GM12878 (cell line): ENCODE measurements at regions of chr5 and their contacts with region 1.

Region 1: GRCh38 chr5:143200781-143201398 is 202.6 kb downstream of the NR3C1 start:
- DNase-seq: no peak
- ATAC-seq: peak; percentile 69
- H3K4me3 ChIP-seq: no peak overlapping the region
- H3K27ac ChIP-seq: peak overlapping the region; percentile 14; the same call in 1 of the 2 replicates
- H3K4me1 ChIP-seq: peaks cover 17% of the 10 kb centered on the region
- H3K27me3 ChIP-seq: no peaks in the 10 kb centered on the region
- CTCF ChIP-seq: no peak
- EP300 ChIP-seq: no peak
- POLR2A ChIP-seq: no peak
- RAD21 ChIP-seq: no peak

Region 2: GRCh38 chr5:143016777-143017516 is 183.9 kb before region 1 on chr5:
- CTCF ChIA-PET with region 1: interaction called, 8 read pairs
- POLR2A ChIA-PET with region 1: interaction called, 11 read pairs
- RAD21 ChIA-PET with region 1: interaction called, 40 read pairs
- SMC1A ChIA-PET with region 1: interaction called, 138 read pairs
- in situ Hi-C with region 1: loop called (anchors 5 kb)
- intact Hi-C with region 1: loop called (anchors 2 kb)
- DNase-seq: no peak
- ATAC-seq: peak; percentile 28
- H3K4me3 ChIP-seq: no peak overlapping the region
- H3K27ac ChIP-seq: no peak overlapping the region
- H3K4me1 ChIP-seq: peaks cover 32% of the 10 kb centered on the region
- H3K27me3 ChIP-seq: no peaks in the 10 kb centered on the region
- CTCF ChIP-seq: peak; percentile 68 to 75 (median 72)
- EP300 ChIP-seq: peak in 1 of 2 experiments; percentile 8; a peak in 1 of 4 replicates
- POLR2A ChIP-seq: no peak
- RAD21 ChIP-seq: peak; percentile 88

Region 3: DNA sequence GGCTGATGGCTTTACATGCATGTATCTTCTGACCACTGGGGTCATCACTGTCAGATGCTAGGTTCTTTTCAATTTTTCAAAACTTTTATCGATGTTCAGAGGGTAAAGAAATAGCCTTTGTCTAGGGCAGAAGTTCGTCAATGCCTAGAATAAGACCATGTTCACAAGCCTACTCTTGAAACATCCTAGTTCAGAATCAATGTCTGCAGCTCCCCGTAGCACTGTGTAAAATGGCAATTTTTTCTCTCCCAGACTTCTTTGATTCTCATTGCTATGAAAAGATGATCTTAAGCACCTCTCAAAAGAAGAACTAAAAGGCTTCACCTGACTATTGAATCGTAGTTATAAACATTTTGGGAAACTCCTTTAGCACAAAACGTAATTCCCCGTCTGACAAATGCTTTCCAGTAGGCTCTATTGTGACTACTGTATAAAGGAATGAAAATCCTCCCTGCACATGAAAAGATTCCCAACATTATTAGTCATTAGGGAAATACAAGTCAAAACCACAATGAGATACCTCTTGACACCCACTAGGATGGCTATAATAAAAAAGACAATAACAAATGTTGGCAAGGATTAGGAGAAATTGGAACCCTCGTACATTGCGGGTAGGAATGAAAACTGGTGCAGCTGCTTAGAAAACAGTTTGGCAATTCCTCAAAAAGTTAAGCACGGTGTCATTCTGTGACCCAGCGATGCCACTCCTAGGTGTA is 167.2 kb before region 1 on chr5:
- CTCF ChIA-PET with region 1: no interaction called
- POLR2A ChIA-PET with region 1: no interaction called
- RAD21 ChIA-PET with region 1: interaction called, 4 read pairs
- SMC1A ChIA-PET with region 1: interaction called, 47 read pairs
- in situ Hi-C with region 1: no loop called
- intact Hi-C with region 1: no loop called
- DNase-seq: no peak
- ATAC-seq: no peak
- H3K4me3 ChIP-seq: no peak overlapping the region
- H3K27ac ChIP-seq: no peak overlapping the region
- H3K4me1 ChIP-seq: peaks cover 23% of the 10 kb centered on the region
- H3K27me3 ChIP-seq: no peaks in the 10 kb centered on the region
- CTCF ChIP-seq: no peak
- EP300 ChIP-seq: no peak
- POLR2A ChIP-seq: no peak
- RAD21 ChIP-seq: no peak

Region 4: GRCh38 chr5:143057580-143057999 is 143.3 kb before region 1 on chr5:
- CTCF ChIA-PET with region 1: interaction called, 5 read pairs
- POLR2A ChIA-PET with region 1: interaction called, 16 read pairs
- RAD21 ChIA-PET with region 1: interaction called, 14 read pairs
- SMC1A ChIA-PET with region 1: interaction called, 50 read pairs
- in situ Hi-C with region 1: loop called (anchors 5 kb)
- intact Hi-C with region 1: loop called (anchors 1 kb)
- DNase-seq: peak; percentile 85
- ATAC-seq: peak; percentile 59
- H3K4me3 ChIP-seq: peak overlapping the region; percentile 77
- H3K27ac ChIP-seq: peak overlapping the region; percentile 100
- H3K4me1 ChIP-seq: peaks cover 56% of the 10 kb centered on the region
- H3K27me3 ChIP-seq: no peaks in the 10 kb centered on the region
- CTCF ChIP-seq: no peak
- EP300 ChIP-seq: peak; percentile 77 to 89; a peak in 3 of 4 replicates
- POLR2A ChIP-seq: peak; percentile 54; the same call in 1 of the 2 replicates
- RAD21 ChIP-seq: peak; percentile 36; the same call in 1 of the 2 replicates

Region 5: GRCh38 chr5:143177263-143177983 is 23.5 kb before region 1 on chr5:
- CTCF ChIA-PET with region 1: interaction called, 82 read pairs
- POLR2A ChIA-PET with region 1: interaction called, 8 read pairs
- RAD21 ChIA-PET with region 1: interaction called, 227 read pairs
- SMC1A ChIA-PET with region 1: interaction called, 193 read pairs
- in situ Hi-C with region 1: no loop called
- intact Hi-C with region 1: no loop called
- DNase-seq: no peak
- ATAC-seq: no peak
- H3K4me3 ChIP-seq: no peak overlapping the region
- H3K27ac ChIP-seq: no peak overlapping the region
- H3K4me1 ChIP-seq: peaks cover 8% of the 10 kb centered on the region
- H3K27me3 ChIP-seq: no peaks in the 10 kb centered on the region
- CTCF ChIP-seq: no peak
- EP300 ChIP-seq: no peak
- POLR2A ChIP-seq: no peak
- RAD21 ChIP-seq: no peak

Region 6: GRCh38 chr5:143213851-143214363 is 13.0 kb after region 1 on chr5:
- CTCF ChIA-PET with region 1: interaction called, 69 read pairs
- POLR2A ChIA-PET with region 1: interaction called, 97 read pairs
- RAD21 ChIA-PET with region 1: interaction called, 482 read pairs
- SMC1A ChIA-PET with region 1: interaction called, 423 read pairs
- in situ Hi-C with region 1: no loop called
- intact Hi-C with region 1: loop called (anchors 1 kb)
- DNase-seq: peak; percentile 97
- ATAC-seq: peak; percentile 68
- H3K4me3 ChIP-seq: peak overlapping the region; percentile 6; the same call in 1 of the 2 replicates
- H3K27ac ChIP-seq: peak overlapping the region; percentile 100
- H3K4me1 ChIP-seq: peaks cover 76% of the 10 kb centered on the region
- H3K27me3 ChIP-seq: no peaks in the 10 kb centered on the region
- CTCF ChIP-seq: peak; percentile 38 to 61 (median 47); a peak in 5 of 6 replicates
- EP300 ChIP-seq: peak; percentile 73 to 82
- POLR2A ChIP-seq: peak; percentile 45
- RAD21 ChIP-seq: peak; percentile 76

Region 7: DNA sequence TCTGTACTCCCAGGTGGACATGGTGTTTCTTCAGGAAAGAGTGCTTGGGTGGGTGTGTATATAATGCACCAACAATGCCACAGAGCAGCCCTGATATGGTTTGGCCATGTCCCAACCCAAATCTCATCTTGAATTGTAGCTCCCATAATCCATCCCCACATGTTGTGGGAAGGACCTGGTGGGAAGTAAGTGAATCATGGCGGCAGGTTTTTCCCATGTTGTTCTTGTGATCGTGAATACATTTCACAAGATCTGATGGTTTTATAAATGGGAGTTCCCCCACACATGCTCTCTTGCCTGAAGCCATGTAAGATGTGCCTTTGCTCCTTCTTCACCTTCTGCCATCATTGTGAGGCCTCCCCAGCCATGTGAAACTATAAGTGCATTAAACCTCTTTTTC is 44.1 kb after region 1 on chr5:
- CTCF ChIA-PET with region 1: no interaction called
- POLR2A ChIA-PET with region 1: no interaction called
- RAD21 ChIA-PET with region 1: no interaction called
- SMC1A ChIA-PET with region 1: no interaction called
- in situ Hi-C with region 1: no loop called
- intact Hi-C with region 1: no loop called
- DNase-seq: no peak
- ATAC-seq: no peak
- H3K4me3 ChIP-seq: no peak overlapping the region
- H3K27ac ChIP-seq: no peak overlapping the region
- H3K4me1 ChIP-seq: no peaks in the 10 kb centered on the region
- H3K27me3 ChIP-seq: no peaks in the 10 kb centered on the region
- CTCF ChIP-seq: no peak
- EP300 ChIP-seq: no peak
- POLR2A ChIP-seq: no peak
- RAD21 ChIP-seq: no peak

Region 8: GRCh38 chr5:143395638-143396352 is 194.9 kb after region 1 on chr5:
- CTCF ChIA-PET with region 1: no interaction called
- POLR2A ChIA-PET with region 1: interaction called, 6 read pairs
- RAD21 ChIA-PET with region 1: interaction called, 61 read pairs
- SMC1A ChIA-PET with region 1: interaction called, 70 read pairs
- in situ Hi-C with region 1: no loop called
- intact Hi-C with region 1: no loop called
- DNase-seq: no peak
- ATAC-seq: peak; percentile 17
- H3K4me3 ChIP-seq: peak overlapping the region; percentile 83
- H3K27ac ChIP-seq: peak overlapping the region; percentile 93
- H3K4me1 ChIP-seq: no peaks in the 10 kb centered on the region
- H3K27me3 ChIP-seq: no peaks in the 10 kb centered on the region
- CTCF ChIP-seq: no peak
- EP300 ChIP-seq: peak; percentile 24 to 31; a peak in 1 of 4 replicates
- POLR2A ChIP-seq: no peak
- RAD21 ChIP-seq: no peak